Head of caudate nucleus (tissue), 42 donors: ENCODE measurements at regions of chr6 and their contacts with region 1.

Region 1: DNA sequence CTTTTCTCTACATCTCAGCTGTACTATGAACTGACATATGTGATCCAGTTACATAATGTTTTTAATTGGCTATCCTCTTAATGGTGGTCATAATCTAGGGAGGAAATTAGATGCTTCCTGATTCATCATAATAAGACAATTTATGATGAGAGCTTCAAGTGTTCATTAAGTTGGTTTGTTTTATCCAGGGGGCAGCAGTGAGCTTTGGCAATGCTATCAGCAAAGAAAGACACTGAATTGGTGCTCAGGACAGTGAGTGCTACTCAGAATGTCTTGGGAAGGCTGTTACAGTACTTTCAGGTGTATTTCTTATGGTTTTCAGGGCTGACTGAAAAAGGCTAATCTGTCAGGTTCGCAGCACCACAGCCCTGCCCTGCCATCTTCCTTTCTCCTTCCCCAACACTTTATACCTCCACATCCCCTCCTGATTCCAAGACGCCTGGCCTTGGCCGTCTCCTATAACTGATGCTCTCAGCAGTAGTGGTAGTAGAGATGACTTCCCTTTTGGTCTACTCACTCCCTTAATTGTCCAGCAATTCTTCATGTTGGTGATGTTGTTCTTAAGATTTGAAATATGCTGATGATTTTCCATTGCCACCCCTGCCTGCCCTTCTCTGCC is 67.0 kb upstream of the TNFAIP3 start:
- DNase-seq: peak in 27 of 42 donors; percentile 19 to 76 (median 48)

Region 2: DNA sequence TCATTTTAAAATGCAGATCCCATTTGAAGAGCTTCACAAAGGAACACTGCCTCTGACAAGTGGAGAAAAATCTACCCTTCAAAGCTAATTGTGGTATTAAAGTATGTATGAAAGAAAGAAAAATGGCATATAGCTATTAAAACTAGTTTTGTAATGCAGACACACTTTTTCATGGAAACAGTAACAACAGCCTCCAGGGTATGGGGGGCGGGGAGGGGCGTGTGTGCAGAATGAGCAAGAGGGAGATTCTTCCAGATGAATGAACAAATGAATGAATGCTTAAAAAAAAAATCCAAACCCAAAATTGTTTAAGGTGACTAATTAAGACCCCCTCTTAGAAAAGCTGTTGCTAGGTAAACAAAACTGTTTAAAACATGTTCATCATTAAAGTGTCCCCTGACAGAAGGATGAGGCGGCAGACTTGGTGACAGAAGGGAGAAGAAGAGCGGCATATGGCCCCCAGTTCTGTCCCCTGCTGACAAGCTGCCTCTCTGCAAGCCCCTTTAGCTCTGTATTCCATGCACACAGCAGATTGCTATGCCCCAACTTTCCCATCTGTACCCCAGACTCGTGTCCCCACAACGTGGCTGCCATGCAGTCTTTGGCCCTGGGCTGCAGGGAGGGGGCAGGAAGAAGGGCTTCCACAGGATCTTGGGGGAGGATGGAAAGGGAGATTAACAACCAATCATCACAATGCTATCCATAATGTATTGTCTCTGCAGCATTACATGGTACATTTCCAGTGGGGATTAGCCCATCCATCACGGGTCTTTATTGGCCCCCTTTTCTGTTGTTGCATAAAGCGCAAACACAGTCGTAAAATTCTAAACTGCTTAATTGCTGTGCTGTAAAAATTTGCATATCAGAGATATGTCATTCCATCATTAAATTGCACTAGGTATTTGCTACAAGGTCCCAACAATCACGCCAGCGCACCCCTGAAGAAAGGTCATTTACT is 197.5 kb before region 1 on chr6:
- intact Hi-C with region 1: no loop called
- DNase-seq: no peak

Region 3: GRCh38 chr6:137944793-137945498 is 144.9 kb after region 1 on chr6:
- intact Hi-C with region 1: loop called (anchors 10 kb)
- DNase-seq: peak in 10 of 42 donors; percentile 3 to 52 (median 22)

Region 4: DNA sequence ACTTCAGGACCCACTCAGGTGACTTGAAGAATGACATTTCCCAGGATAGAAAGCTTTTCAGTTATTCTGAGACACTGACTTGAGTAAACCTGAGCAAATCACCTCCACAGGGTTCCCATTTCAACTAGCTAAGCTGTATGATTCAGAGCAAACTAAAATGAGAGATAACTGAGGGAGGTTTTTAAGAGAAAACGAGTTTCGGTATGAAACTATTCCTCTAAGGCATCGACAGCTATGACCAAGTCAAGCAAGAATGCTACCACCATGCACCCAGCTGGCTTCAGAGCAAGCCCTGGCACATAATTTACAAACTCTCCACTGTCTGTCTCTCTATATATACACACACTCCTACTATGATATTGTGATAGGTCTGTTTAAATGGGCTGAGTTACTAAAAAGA is 231.8 kb after region 1 on chr6:
- intact Hi-C with region 1: no loop called
- DNase-seq: no peak